Panc1 (cell line): ENCODE measurements at regions of chr20 and their contacts with region 1.

Region 1: GRCh38 chr20:4573564-4574355 is 147.9 kb upstream of the PRND start:
- DNase-seq: peak; percentile 82
- ATAC-seq: peak; percentile 98
- H3K4me3 ChIP-seq: peak overlapping the region; percentile 7 to 48; a peak in 3 of 4 replicates
- H3K27ac ChIP-seq: peak overlapping the region; percentile 26; the same call in 1 of the 2 replicates
- H3K4me1 ChIP-seq: peaks cover 7% of the 10 kb centered on the region; the same call in 1 of the 2 replicates
- H3K27me3 ChIP-seq: no peaks in the 10 kb centered on the region
- CTCF ChIP-seq: no peak

Region 2: DNA sequence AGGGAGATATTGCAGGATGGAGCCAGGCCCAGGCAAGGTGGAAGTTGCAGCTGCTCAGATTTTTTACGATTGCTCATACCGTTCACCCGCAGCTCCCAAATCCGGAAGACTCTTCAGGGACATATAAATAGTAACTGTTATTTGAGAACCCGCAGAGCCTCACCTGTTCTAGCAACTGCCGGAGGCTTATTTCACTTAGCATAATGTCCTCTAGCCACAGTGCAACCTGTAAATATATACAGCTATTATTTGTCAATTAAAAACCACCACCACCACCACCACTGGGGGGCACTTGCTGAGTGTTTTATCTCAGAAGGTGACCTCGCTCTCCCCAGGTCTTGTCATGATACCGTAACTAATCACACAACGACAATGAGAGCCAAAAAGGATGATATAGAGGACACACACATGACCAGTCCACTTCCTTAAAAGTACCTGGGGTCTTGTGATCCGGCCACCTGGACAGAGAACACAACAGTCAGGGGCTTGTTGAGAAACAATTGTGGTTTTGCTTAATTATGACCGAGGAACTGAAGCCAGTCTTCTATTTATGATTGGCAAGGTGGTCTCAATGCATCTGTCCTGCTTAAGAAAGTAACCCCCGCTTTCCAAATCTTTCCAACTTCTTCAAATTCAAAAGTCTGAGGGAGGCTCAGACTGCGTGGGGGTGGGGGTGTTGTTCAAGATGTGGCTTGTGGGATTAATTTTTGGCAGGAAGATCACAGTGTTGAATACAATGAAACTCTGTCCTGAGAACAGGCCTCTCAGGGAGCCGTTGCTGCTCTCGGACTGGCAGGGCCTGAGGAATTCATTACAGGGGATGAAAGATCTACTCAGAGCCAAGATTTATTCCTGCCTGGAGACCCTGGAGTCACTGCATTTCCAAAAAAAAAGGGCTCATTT is 40.2 kb after region 1 on chr20:
- CTCF ChIA-PET with region 1: no interaction called
- POLR2A ChIA-PET with region 1: no interaction called
- in situ Hi-C with region 1: no loop called
- intact Hi-C with region 1: no loop called
- DNase-seq: peak; percentile 18
- ATAC-seq: peak; percentile 85
- H3K4me3 ChIP-seq: no peak overlapping the region
- H3K27ac ChIP-seq: no peak overlapping the region
- H3K4me1 ChIP-seq: no peaks in the 10 kb centered on the region
- H3K27me3 ChIP-seq: no peaks in the 10 kb centered on the region
- CTCF ChIP-seq: peak; percentile 74

Region 3: GRCh38 chr20:4844751-4845465 is 271.1 kb after region 1 on chr20:
- CTCF ChIA-PET with region 1: interaction called, 10 read pairs
- POLR2A ChIA-PET with region 1: no interaction called
- in situ Hi-C with region 1: no loop called
- intact Hi-C with region 1: no loop called
- DNase-seq: no peak
- ATAC-seq: no peak
- H3K4me3 ChIP-seq: no peak overlapping the region
- H3K27ac ChIP-seq: no peak overlapping the region
- H3K4me1 ChIP-seq: no peaks in the 10 kb centered on the region
- H3K27me3 ChIP-seq: no peaks in the 10 kb centered on the region
- CTCF ChIP-seq: no peak

Region 4: DNA sequence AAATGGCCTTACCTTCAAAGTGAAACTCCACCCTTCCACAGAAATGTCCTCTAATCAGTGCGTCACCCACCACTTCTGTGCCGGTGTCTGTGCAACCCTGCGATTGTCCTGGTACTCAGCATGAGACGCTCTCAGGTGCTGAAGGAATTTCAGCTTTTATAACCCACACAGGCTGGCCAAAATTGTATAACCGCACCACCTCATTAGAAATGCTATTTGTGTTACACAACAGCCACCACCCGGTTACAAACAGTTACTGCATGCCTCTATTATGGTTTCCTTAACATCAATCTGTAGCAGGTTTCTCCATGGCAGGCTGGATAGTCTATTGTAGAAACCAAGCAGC is 376.0 kb after region 1 on chr20:
- CTCF ChIA-PET with region 1: no interaction called
- POLR2A ChIA-PET with region 1: no interaction called
- in situ Hi-C with region 1: no loop called
- intact Hi-C with region 1: no loop called
- DNase-seq: peak; percentile 33
- ATAC-seq: peak; percentile 89
- H3K4me3 ChIP-seq: no peak overlapping the region
- H3K27ac ChIP-seq: no peak overlapping the region
- H3K4me1 ChIP-seq: no peaks in the 10 kb centered on the region
- H3K27me3 ChIP-seq: no peaks in the 10 kb centered on the region
- CTCF ChIP-seq: peak; percentile 73